ENCODE measurements at regions of chr21 and their contacts with region 1.

Region 1: DNA sequence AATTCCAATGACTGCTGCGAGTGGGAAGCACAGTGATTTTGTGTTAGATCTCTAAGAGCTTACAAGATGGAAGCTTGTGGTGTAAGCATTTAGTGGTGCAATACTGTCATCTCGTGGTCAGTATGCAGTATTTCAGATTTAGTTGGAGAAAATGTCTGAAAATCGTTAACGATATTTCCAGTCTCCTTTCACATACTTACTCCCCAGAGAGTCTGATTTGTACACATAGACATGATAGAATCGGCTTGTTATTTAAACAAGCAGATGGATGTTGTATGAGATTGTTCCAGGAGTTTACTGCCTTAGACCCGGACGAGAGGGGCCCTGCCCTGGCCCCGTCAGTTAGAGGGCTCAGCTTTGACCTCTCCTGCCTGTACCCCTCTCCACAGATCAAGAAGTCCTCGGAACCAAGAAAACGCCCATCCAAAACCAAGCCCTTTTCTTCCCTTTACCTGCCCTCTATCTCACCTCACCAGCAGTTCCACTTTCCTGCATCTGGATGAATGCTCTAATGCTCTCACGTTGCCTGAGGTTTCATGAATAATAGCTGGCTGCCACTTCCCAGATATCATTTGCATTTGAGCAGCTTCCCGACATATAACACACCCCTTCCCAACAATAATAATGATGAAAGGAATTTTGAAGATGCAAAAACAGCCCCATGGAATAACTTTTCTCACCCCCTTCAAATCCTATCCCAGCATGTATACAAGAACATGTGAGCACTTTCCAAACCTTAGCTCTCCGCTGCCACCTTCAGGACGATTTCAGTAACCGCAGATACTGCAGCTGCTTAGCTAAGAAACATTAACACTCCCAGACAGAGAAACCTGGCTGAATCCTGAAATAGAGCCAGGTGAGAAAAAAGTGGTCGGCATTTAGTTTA is 247.3 kb downstream of the LTN1 start:
- DNase-seq: peak; percentile 84

Region 2: DNA sequence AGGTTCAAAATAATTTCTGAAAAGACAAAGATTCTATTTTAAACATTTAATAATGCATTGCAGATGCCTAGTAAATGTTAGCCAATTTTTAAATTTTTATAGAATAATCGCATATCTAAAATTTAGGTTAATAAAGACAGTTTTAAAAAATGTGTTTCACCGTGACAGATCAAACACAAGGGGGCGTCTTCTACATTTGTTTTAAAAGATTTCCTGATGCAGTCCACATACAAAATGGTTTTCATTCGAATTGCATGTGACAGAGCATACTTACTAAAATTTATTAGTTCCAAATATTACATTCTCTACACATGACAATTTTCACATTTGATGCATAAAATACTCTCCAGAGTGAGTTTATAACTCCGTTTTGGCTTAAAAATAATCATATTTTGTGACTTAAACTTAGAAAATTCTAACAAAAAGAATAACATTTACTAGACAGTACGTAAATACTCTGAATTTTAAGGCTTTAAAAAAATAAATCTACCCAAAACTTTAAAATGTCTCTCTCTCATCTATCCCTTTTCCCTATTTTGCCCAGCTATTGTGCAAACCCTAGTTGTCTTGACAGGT is 1975.7 kb before region 1 on chr21:
- intact Hi-C with region 1: loop called (anchors 10 kb)
- DNase-seq: no peak

Region 3: DNA sequence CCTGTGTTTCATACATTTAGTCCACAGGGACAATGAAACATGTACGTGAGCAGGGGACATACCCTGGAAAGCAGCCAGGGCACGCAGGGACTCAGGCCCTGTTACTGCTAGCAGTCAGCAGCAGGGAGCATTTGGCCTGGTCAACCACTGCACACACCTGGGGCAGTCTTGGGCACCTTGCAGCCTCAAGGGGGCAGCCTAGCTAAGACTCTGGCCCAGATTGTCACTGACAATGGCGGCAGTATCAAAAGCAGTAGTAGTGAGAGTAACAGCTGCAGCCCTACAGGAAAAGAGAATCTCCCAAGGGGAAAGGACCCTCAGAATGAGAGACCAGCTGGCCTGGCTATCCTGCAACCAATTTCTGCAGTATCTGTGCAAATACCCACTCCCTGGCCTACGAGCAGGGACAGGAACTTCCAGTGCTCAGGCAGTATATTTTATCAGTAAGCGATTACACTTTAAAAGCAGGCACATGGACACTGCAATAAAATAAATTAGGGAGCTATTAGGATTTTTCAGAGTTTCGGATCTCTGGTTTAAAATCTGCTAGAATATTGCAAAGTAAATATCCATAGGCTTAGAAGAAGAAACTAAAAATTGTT is 228.3 kb before region 1 on chr21:
- intact Hi-C with region 1: loop called (anchors 2 kb)
- DNase-seq: peak; percentile 78